Gastrocnemius medialis (tissue), 4 donors: ENCODE measurements at regions of chr1 and their contacts with region 1.

Region 1: GRCh38 chr1:10283318-10283984 is 73.1 kb downstream of the KIF1B start:
- DNase-seq: peak; percentile 58 to 62
- ATAC-seq: peak; percentile 37 to 66
- H3K4me3 ChIP-seq: no peak overlapping the region
- H3K27ac ChIP-seq: peak overlapping the region; percentile 83 to 92 (median 90)
- H3K4me1 ChIP-seq: peaks cover 35 to 69% of the 10 kb centered on the region in 2 donors
- H3K27me3 ChIP-seq: no peaks in the 10 kb centered on the region
- CTCF ChIP-seq: no peak
- POLR2A ChIP-seq: no peak

Region 2: GRCh38 chr1:10253755-10254154 is 29.7 kb before region 1 on chr1:
- in situ Hi-C with region 1: no loop called
- intact Hi-C with region 1: loop called (anchors 2 kb)
- DNase-seq: peak; percentile 73 to 81
- ATAC-seq: peak; percentile 93 to 94
- H3K4me3 ChIP-seq: no peak overlapping the region
- H3K27ac ChIP-seq: peak overlapping the region; percentile 89 to 93 (median 92)
- H3K4me1 ChIP-seq: peaks cover 71 to 76% of the 10 kb centered on the region in 2 donors
- H3K27me3 ChIP-seq: no peaks in the 10 kb centered on the region
- CTCF ChIP-seq: no peak
- POLR2A ChIP-seq: peak in 1 of 2 donors; percentile 18

Region 3: DNA sequence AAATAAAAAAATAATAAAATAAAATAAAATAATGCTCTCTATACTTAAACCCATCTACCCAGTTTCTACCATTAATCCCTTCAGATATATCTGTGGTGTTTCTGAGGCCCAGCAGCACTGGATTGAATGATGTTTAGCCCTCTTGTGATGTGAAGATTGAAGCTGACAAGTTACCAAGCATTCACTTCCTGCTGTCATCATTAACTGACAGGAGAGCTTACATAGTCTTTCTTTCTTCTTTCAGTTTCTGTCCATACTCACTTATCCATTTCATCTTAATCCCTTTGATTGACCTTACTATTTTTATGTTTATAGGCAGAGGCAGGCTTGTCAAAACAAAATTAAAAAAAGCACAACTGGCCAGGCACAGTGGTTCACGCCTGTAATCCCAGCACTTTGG is 76.6 kb after region 1 on chr1:
- in situ Hi-C with region 1: no loop called
- intact Hi-C with region 1: no loop called
- DNase-seq: no peak
- ATAC-seq: no peak
- H3K4me3 ChIP-seq: no peak overlapping the region
- H3K27ac ChIP-seq: no peak overlapping the region
- H3K4me1 ChIP-seq: no peaks in the 10 kb centered on the region
- H3K27me3 ChIP-seq: no peaks in the 10 kb centered on the region
- CTCF ChIP-seq: no peak
- POLR2A ChIP-seq: no peak